ENCODE measurements at regions of chr3 and their contacts with region 1.

Region 1: GRCh38 chr3:150721285-150722130 is 17.8 kb upstream of the ERICH6 start:
- DNase-seq: peak; percentile 73
- CTCF ChIP-seq: peak; percentile 68

Region 2: GRCh38 chr3:150106740-150107428 is 614.6 kb before region 1 on chr3:
- CTCF ChIA-PET with region 1: no interaction called
- POLR2A ChIA-PET with region 1: no interaction called
- DNase-seq: no peak
- CTCF ChIP-seq: no peak

Region 3: GRCh38 chr3:150681057-150681456 is 40.5 kb before region 1 on chr3:
- CTCF ChIA-PET with region 1: interaction called, 10 read pairs
- POLR2A ChIA-PET with region 1: no interaction called
- DNase-seq: peak; percentile 34
- CTCF ChIP-seq: no peak

Region 4: DNA sequence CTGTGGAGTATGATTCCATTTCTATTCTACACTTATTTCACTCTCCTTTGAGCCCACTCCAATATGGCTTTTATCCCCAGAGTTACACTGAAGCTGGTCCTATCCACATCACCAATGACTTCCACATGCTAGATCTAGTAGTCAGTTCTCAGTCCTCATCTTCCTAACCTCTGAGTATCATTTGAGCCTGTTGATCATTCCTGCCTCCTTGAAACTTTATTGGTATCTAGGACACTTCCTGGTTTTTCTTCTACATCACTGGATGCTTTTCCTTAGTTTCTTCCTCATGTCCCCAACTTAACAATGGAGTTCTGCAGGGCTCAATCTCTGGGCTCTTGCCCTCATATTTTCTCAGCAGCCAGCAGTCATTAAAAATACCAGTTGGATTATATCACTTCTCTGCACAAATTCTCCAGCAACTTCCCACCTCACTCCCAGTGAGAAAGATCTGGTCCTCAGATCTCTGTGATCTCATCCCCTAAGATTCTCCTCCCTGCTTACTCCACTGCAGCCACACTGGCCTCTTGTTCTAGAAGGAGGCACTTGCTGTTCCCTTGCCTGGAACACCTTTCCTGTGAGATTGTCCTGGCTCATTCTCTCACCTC is 24.0 kb before region 1 on chr3:
- CTCF ChIA-PET with region 1: no interaction called
- POLR2A ChIA-PET with region 1: no interaction called
- DNase-seq: no peak
- CTCF ChIP-seq: no peak

Region 5: GRCh38 chr3:150710097-150710496 is 11.4 kb before region 1 on chr3:
- CTCF ChIA-PET with region 1: interaction called, 13 read pairs
- POLR2A ChIA-PET with region 1: no interaction called
- DNase-seq: no peak
- CTCF ChIP-seq: no peak

Region 6: GRCh38 chr3:150763122-150763841 is 41.8 kb after region 1 on chr3 and contains the start of gene SIAH2:
- CTCF ChIA-PET with region 1: interaction called, 22 read pairs
- POLR2A ChIA-PET with region 1: interaction called, 3 read pairs
- DNase-seq: peak; percentile 91
- CTCF ChIP-seq: no peak

Region 7: GRCh38 chr3:150870396-150870795 is 148.9 kb after region 1 on chr3:
- CTCF ChIA-PET with region 1: interaction called, 26 read pairs
- POLR2A ChIA-PET with region 1: no interaction called
- DNase-seq: no peak
- CTCF ChIP-seq: no peak

Measured in GM10248 (cell line).